ENCODE measurements at regions of chr6 and their contacts with region 1.

Region 1: GRCh38 chr6:87164004-87164403 is 8.6 kb downstream of the ZNF292 start:
- DNase-seq: no peak
- ATAC-seq: no peak
- H3K4me3 ChIP-seq: no peak overlapping the region
- H3K4me3 Mint-ChIP-seq: peak overlapping the region in 8 of 10 donors; percentile 0 to 55 (median 26)
- H3K27ac ChIP-seq: no peak overlapping the region
- H3K27ac Mint-ChIP-seq: peak overlapping the region in 2 of 9 donors; percentile 4 to 14
- H3K4me1 ChIP-seq: peaks cover 29 to 40% of the 10 kb centered on the region in 2 donors
- H3K4me1 Mint-ChIP-seq: peaks cover 58 to 97% (median 90%) of the 10 kb centered on the region in 7 donors
- H3K27me3 ChIP-seq: no peaks in the 10 kb centered on the region
- H3K27me3 Mint-ChIP-seq: no peaks in the 10 kb centered on the region

Region 2: GRCh38 chr6:87174078-87174579 is 10.1 kb after region 1 on chr6:
- CTCF ChIA-PET with region 1: no interaction called
- POLR2A ChIA-PET with region 1: interaction called, 4 read pairs
- intact Hi-C with region 1: loop called (anchors 1 to 2 kb)
- DNase-seq: peak in 1 of 9 donors; percentile 8
- ATAC-seq: peak; percentile 52
- H3K4me3 ChIP-seq: no peak overlapping the region
- H3K4me3 Mint-ChIP-seq: peak overlapping the region in 8 of 10 donors; percentile 4 to 65 (median 36)
- H3K27ac ChIP-seq: no peak overlapping the region
- H3K27ac Mint-ChIP-seq: peak overlapping the region in 7 of 9 donors; percentile 33 to 60 (median 47)
- H3K4me1 ChIP-seq: peaks cover 6 to 26% of the 10 kb centered on the region in 2 donors
- H3K4me1 Mint-ChIP-seq: peaks cover 42 to 94% (median 90%) of the 10 kb centered on the region in 7 donors
- H3K27me3 ChIP-seq: no peaks in the 10 kb centered on the region
- H3K27me3 Mint-ChIP-seq: no peaks in the 10 kb centered on the region

Region 3: DNA sequence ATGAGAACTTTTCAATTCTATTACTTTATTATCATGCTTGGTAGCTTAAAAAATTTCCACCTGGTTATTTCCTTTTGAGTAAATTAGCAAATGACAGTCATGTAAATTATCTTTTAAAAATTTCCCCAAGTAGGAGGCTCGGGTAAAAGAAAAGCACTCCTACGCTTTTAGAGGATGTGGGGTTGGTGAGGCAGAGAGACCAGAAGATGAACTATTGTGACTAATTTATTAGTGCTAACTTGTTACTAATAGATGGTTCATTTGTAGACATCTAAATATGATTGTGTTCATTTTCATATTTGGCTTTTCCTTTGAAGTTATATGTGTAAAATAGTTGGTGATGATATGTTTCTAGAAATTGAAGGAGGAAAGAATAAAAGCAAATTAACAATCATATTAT is 18.3 kb after region 1 on chr6:
- CTCF ChIA-PET with region 1: no interaction called
- POLR2A ChIA-PET with region 1: interaction called, 4 read pairs
- intact Hi-C with region 1: loop called (anchors 2 kb)
- DNase-seq: no peak
- ATAC-seq: no peak
- H3K4me3 ChIP-seq: no peak overlapping the region
- H3K4me3 Mint-ChIP-seq: peak overlapping the region in 1 of 10 donors; percentile 16
- H3K27ac ChIP-seq: no peak overlapping the region
- H3K27ac Mint-ChIP-seq: peak overlapping the region in 4 of 9 donors; percentile 17 to 64 (median 42)
- H3K4me1 ChIP-seq: peaks cover 4 to 9% of the 10 kb centered on the region in 2 donors
- H3K4me1 Mint-ChIP-seq: peaks cover 29 to 86% (median 74%) of the 10 kb centered on the region in 7 donors
- H3K27me3 ChIP-seq: no peaks in the 10 kb centered on the region
- H3K27me3 Mint-ChIP-seq: no peaks in the 10 kb centered on the region

Measured in naive thymus-derived CD4-positive, alpha-beta T cell (primary cell).